ENCODE measurements at regions of chrX and their contacts with region 1.

Region 1: GRCh38 chrX:64205735-64206491 is 405 bp upstream of the AMER1 start:
- DNase-seq: peak; percentile 90
- H3K4me3 Mint-ChIP-seq: peak overlapping the region; percentile 79
- H3K27ac Mint-ChIP-seq: peak overlapping the region; percentile 91
- H3K4me1 Mint-ChIP-seq: peaks cover 10% of the 10 kb centered on the region
- H3K27me3 Mint-ChIP-seq: no peaks in the 10 kb centered on the region

Region 2: GRCh38 chrX:63350941-63351616 is 854.8 kb before region 1 on chrX and contains the start of gene SPIN4:
- CTCF ChIA-PET with region 1: no interaction called
- intact Hi-C with region 1: loop called (anchors 2 kb)
- DNase-seq: peak; percentile 68
- H3K4me3 Mint-ChIP-seq: peak within 1 kb of the TSS; percentile 79
- H3K27ac Mint-ChIP-seq: peak within 1 kb of the TSS; percentile 72
- H3K4me1 Mint-ChIP-seq: peaks cover 13% of the 10 kb centered on the region
- H3K27me3 Mint-ChIP-seq: no peaks in the 10 kb centered on the region
- total RNA-seq, gene SPIN4: 3.1 to 3.7 TPM

Region 3: DNA sequence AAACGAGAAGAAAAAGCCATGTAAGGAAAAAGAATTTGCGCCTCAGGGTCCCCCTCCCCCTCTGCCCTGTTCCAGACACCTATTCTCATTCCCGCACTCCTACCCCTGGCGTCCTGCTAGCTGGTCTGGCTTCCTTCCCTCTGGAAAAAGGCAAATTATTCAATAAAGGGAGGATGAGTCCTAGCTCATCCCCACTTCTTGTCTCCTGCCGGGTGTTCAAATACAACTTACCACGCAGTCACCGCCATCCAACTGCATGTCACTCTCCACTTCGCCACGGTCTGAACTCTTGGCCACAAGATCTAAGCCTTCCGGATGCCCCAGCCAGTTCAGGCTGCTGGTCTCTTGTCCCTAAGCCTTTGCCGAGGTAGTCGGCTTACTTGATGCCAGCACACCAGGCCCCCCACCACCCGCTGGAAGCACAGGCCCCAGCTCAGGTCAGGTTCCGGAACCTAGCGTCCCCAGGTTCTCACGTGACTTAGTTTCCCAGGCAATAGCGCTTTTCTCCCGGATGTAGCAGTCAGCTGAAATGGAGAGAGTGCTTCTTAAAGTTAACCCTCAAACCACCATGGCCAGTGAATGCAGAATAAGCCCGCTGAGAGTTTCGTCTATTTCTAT is 645.2 kb before region 1 on chrX:
- CTCF ChIA-PET with region 1: no interaction called
- intact Hi-C with region 1: loop called (anchors 5 kb)
- DNase-seq: peak; percentile 70
- H3K4me3 Mint-ChIP-seq: peak overlapping the region; percentile 98
- H3K27ac Mint-ChIP-seq: peak overlapping the region; percentile 88
- H3K4me1 Mint-ChIP-seq: peaks cover 14% of the 10 kb centered on the region
- H3K27me3 Mint-ChIP-seq: no peaks in the 10 kb centered on the region

Region 4: GRCh38 chrX:63754860-63755582 is 450.9 kb before region 1 on chrX:
- CTCF ChIA-PET with region 1: no interaction called
- intact Hi-C with region 1: loop called (anchors 2 kb)
- DNase-seq: peak; percentile 90
- H3K4me3 Mint-ChIP-seq: peak overlapping the region; percentile 90
- H3K27ac Mint-ChIP-seq: peak overlapping the region; percentile 96
- H3K4me1 Mint-ChIP-seq: peaks cover 29% of the 10 kb centered on the region
- H3K27me3 Mint-ChIP-seq: no peaks in the 10 kb centered on the region

Region 5: GRCh38 chrX:64330284-64330683 is 124.4 kb after region 1 on chrX:
- CTCF ChIA-PET with region 1: no interaction called
- intact Hi-C with region 1: no loop called
- DNase-seq: no peak
- H3K4me3 Mint-ChIP-seq: no peak overlapping the region
- H3K27ac Mint-ChIP-seq: no peak overlapping the region
- H3K4me1 Mint-ChIP-seq: no peaks in the 10 kb centered on the region
- H3K27me3 Mint-ChIP-seq: no peaks in the 10 kb centered on the region

Region 6: DNA sequence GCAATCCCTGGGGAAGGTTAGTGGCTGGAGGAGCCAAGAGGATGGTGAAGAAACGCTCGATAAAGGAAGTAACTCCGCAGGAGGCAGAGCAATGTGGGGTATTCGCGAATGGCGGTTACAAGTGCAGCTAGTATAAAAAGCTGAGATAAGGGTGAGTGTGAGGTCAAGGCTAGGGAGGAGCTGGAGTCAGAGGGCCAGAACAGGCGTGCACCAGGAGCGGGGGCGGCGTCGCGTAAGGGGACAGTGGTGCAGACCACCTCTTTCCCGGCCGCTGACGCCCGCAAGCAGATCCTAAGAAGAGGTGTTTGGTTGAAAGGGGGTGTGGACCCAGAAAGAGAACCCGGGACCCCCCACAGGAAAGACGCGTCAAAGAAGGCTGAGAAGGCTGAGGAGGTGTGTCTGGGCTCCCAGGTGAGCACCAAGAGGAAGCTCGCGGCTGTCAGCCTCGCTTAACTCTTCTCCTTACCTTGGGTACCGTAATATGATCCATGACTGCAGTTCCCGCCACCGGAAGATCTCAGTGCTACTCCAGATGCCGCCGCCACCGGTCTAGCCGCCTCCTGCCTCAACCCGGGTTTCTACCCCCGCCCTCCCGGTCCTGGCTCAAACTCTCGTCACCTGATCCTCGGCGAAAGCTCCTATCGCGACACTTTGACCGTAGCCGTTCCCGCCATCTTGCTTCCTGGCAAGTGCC is 189.1 kb after region 1 on chrX and contains the start of gene MTMR8:
- CTCF ChIA-PET with region 1: no interaction called
- intact Hi-C with region 1: loop called (anchors 1 kb)
- DNase-seq: peak; percentile 88
- H3K4me3 Mint-ChIP-seq: peak within 1 kb of the TSS; percentile 89
- H3K27ac Mint-ChIP-seq: peak within 1 kb of the TSS; percentile 75
- H3K4me1 Mint-ChIP-seq: peaks cover 17% of the 10 kb centered on the region
- H3K27me3 Mint-ChIP-seq: no peaks in the 10 kb centered on the region
- total RNA-seq, gene MTMR8: 3.5 to 6.4 TPM

Region 7: DNA sequence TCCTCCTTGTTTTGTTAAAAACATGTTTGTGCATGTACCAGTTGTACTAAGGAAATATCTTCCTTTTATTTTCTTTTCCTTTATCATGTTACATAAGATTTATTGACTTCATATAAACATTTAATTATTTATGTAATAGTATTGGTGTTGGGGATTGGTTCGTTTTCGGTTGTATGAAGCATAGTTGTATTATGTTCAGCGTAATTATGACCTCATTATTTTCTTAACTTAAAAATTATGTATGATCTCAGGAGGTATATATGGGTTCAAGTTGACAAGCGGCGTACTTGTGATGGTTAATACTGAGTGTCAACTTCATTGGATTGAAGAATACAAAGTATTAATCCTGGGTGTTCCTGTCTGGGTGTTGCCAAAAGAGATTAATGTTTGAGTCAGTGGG is 425.9 kb after region 1 on chrX:
- CTCF ChIA-PET with region 1: no interaction called
- intact Hi-C with region 1: no loop called
- DNase-seq: no peak
- H3K4me3 Mint-ChIP-seq: no peak overlapping the region
- H3K27ac Mint-ChIP-seq: no peak overlapping the region
- H3K4me1 Mint-ChIP-seq: no peaks in the 10 kb centered on the region
- H3K27me3 Mint-ChIP-seq: no peaks in the 10 kb centered on the region

Region 8: GRCh38 chrX:64975989-64976672 is 770.2 kb after region 1 on chrX and contains the start of gene ZC4H2:
- CTCF ChIA-PET with region 1: no interaction called
- intact Hi-C with region 1: loop called (anchors 2 kb)
- DNase-seq: peak; percentile 80
- H3K4me3 Mint-ChIP-seq: peak within 1 kb of the TSS; percentile 96
- H3K27ac Mint-ChIP-seq: peak within 1 kb of the TSS; percentile 80
- H3K4me1 Mint-ChIP-seq: peaks cover 18% of the 10 kb centered on the region
- H3K27me3 Mint-ChIP-seq: no peaks in the 10 kb centered on the region
- total RNA-seq, gene ZC4H2: 15.6 to 16.6 TPM

Region 9: GRCh38 chrX:65534450-65535292 is 1328.8 kb after region 1 on chrX and contains the start of gene LAS1L:
- CTCF ChIA-PET with region 1: no interaction called
- intact Hi-C with region 1: loop called (anchors 1 kb)
- DNase-seq: peak; percentile 93
- H3K4me3 Mint-ChIP-seq: peak within 1 kb of the TSS; percentile 96
- H3K27ac Mint-ChIP-seq: peak within 1 kb of the TSS; percentile 89
- H3K4me1 Mint-ChIP-seq: peaks cover 16% of the 10 kb centered on the region
- H3K27me3 Mint-ChIP-seq: no peaks in the 10 kb centered on the region
- total RNA-seq, gene LAS1L: 60.4 to 61.1 TPM

Measured in activated naive CD4-positive, alpha-beta T cell treated with anti-CD3 and anti-CD28 coated beads for 36 hours (primary cell).